Breast epithelium (tissue), 4 donors: ENCODE measurements at regions of chr6 and their contacts with region 1.

Region 1: GRCh38 chr6:78533426-78533825 is 333.9 kb upstream of the IRAK1BP1 start:
- DNase-seq: no peak
- H3K4me3 ChIP-seq: no peak overlapping the region
- H3K27ac ChIP-seq: no peak overlapping the region
- H3K4me1 ChIP-seq: no peaks in the 10 kb centered on the region
- H3K27me3 ChIP-seq: no peaks in the 10 kb centered on the region
- CTCF ChIP-seq: no peak
- POLR2A ChIP-seq: no peak

Region 2: GRCh38 chr6:78505178-78505577 is 28.2 kb before region 1 on chr6:
- intact Hi-C with region 1: no loop called
- DNase-seq: no peak
- H3K4me3 ChIP-seq: no peak overlapping the region
- H3K27ac ChIP-seq: no peak overlapping the region
- H3K4me1 ChIP-seq: no peaks in the 10 kb centered on the region
- H3K27me3 ChIP-seq: no peaks in the 10 kb centered on the region
- CTCF ChIP-seq: no peak
- POLR2A ChIP-seq: no peak

Region 3: GRCh38 chr6:78770766-78771165 is 237.3 kb after region 1 on chr6:
- intact Hi-C with region 1: no loop called
- DNase-seq: no peak
- H3K4me3 ChIP-seq: no peak overlapping the region
- H3K27ac ChIP-seq: no peak overlapping the region
- H3K4me1 ChIP-seq: no peaks in the 10 kb centered on the region
- H3K27me3 ChIP-seq: no peaks in the 10 kb centered on the region
- CTCF ChIP-seq: no peak
- POLR2A ChIP-seq: no peak

Region 4: GRCh38 chr6:78867370-78868040 is 334.1 kb after region 1 on chr6 and contains the start of gene IRAK1BP1:
- intact Hi-C with region 1: loop called (anchors 5 kb)
- DNase-seq: peak; percentile 48 to 58
- H3K4me3 ChIP-seq: peak within 1 kb of the TSS; percentile 72 to 98 (median 90)
- H3K27ac ChIP-seq: peak within 1 kb of the TSS; percentile 76 to 77
- H3K4me1 ChIP-seq: peaks cover 0 to 8% of the 10 kb centered on the region in 2 donors
- H3K27me3 ChIP-seq: no peaks in the 10 kb centered on the region
- CTCF ChIP-seq: no peak
- POLR2A ChIP-seq: no peak
- total RNA-seq, gene IRAK1BP1: 3.5 to 10.0 (median 4.3) TPM

Region 5: DNA sequence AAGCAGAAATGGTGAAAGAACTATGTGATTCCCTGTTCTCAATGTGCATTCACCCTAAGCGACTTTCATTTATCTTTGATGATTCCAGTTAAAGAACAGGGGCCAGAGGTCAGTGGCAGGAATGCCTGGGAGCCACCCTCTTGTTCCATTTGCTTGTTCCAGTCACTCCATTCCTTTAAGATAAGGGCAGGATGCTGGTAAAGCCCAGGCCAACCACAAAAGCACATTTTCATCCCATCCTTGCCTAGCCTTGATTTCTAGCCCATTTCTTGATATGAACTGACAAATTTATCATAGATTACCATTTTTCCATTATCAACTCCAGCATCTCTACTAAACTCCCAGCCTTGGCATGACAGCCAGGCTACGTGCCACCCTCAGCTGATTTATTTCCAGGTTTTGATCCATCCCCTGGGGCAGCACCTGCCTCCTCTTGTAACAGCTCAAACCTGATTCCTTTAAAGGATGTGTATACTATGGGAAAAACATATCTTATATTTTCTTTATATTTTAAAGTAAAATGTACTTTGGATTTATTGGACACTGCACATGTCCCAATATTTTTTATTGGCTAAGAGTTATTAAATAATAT is 681.9 kb after region 1 on chr6:
- intact Hi-C with region 1: no loop called
- DNase-seq: no peak
- H3K4me3 ChIP-seq: no peak overlapping the region
- H3K27ac ChIP-seq: no peak overlapping the region
- H3K4me1 ChIP-seq: no peaks in the 10 kb centered on the region
- H3K27me3 ChIP-seq: no peaks in the 10 kb centered on the region
- CTCF ChIP-seq: no peak
- POLR2A ChIP-seq: no peak

Region 6: GRCh38 chr6:79930006-79930405 is 1396.6 kb after region 1 on chr6:
- intact Hi-C with region 1: no loop called
- DNase-seq: no peak
- H3K4me3 ChIP-seq: no peak overlapping the region
- H3K27ac ChIP-seq: no peak overlapping the region
- H3K4me1 ChIP-seq: no peaks in the 10 kb centered on the region
- H3K27me3 ChIP-seq: no peaks in the 10 kb centered on the region
- CTCF ChIP-seq: no peak
- POLR2A ChIP-seq: no peak